B cell (primary cell): ENCODE measurements at regions of chr22 and their contacts with region 1.

Region 1: GRCh38 chr22:33565580-33565995 is 354.7 kb downstream of the LARGE1 start:
- DNase-seq: no peak
- ATAC-seq: no peak
- H3K4me3 ChIP-seq: no peak overlapping the region
- H3K4me3 Mint-ChIP-seq: peak overlapping the region; percentile 18
- H3K27ac ChIP-seq: no peak overlapping the region
- H3K27ac Mint-ChIP-seq: peak overlapping the region; percentile 67
- H3K4me1 ChIP-seq: peaks cover 70 to 73% of the 10 kb centered on the region in 2 donors
- H3K4me1 Mint-ChIP-seq: peaks cover 72% of the 10 kb centered on the region
- H3K27me3 ChIP-seq: no peaks in the 10 kb centered on the region
- H3K27me3 Mint-ChIP-seq: no peaks in the 10 kb centered on the region
- CTCF ChIP-seq: no peak

Region 2: GRCh38 chr22:33539902-33540751 is 25.5 kb before region 1 on chr22:
- CTCF ChIA-PET with region 1: no interaction called
- POLR2A ChIA-PET with region 1: no interaction called
- intact Hi-C with region 1: no loop called
- DNase-seq: no peak
- ATAC-seq: no peak
- H3K4me3 ChIP-seq: no peak overlapping the region
- H3K4me3 Mint-ChIP-seq: no peak overlapping the region
- H3K27ac ChIP-seq: no peak overlapping the region
- H3K27ac Mint-ChIP-seq: no peak overlapping the region
- H3K4me1 ChIP-seq: peaks cover 16 to 22% of the 10 kb centered on the region in 2 donors
- H3K4me1 Mint-ChIP-seq: peaks cover 27% of the 10 kb centered on the region
- H3K27me3 ChIP-seq: no peaks in the 10 kb centered on the region
- H3K27me3 Mint-ChIP-seq: no peaks in the 10 kb centered on the region
- CTCF ChIP-seq: no peak

Region 3: GRCh38 chr22:33579448-33580093 is 14.0 kb after region 1 on chr22:
- CTCF ChIA-PET with region 1: interaction called, 31 read pairs
- POLR2A ChIA-PET with region 1: interaction called, 6 read pairs
- intact Hi-C with region 1: loop called (anchors 1 kb)
- DNase-seq: peak; percentile 79
- ATAC-seq: peak; percentile 69
- H3K4me3 ChIP-seq: no peak overlapping the region
- H3K4me3 Mint-ChIP-seq: peak overlapping the region; percentile 61
- H3K27ac ChIP-seq: peak overlapping the region; percentile 48 to 72
- H3K27ac Mint-ChIP-seq: peak overlapping the region; percentile 86
- H3K4me1 ChIP-seq: peaks cover 46 to 52% of the 10 kb centered on the region in 2 donors
- H3K4me1 Mint-ChIP-seq: peaks cover 51% of the 10 kb centered on the region
- H3K27me3 ChIP-seq: no peaks in the 10 kb centered on the region
- H3K27me3 Mint-ChIP-seq: no peaks in the 10 kb centered on the region
- CTCF ChIP-seq: peak; percentile 98

Region 4: GRCh38 chr22:33841281-33842005 is 275.9 kb after region 1 on chr22:
- CTCF ChIA-PET with region 1: no interaction called
- POLR2A ChIA-PET with region 1: no interaction called
- intact Hi-C with region 1: loop called (anchors 2 kb)
- DNase-seq: no peak
- ATAC-seq: peak; percentile 24
- H3K4me3 ChIP-seq: peak overlapping the region in 1 of 5 experiments; percentile 31
- H3K4me3 Mint-ChIP-seq: peak overlapping the region; percentile 74
- H3K27ac ChIP-seq: peak overlapping the region; percentile 10 to 27
- H3K27ac Mint-ChIP-seq: peak overlapping the region; percentile 67
- H3K4me1 ChIP-seq: peaks cover 15 to 18% of the 10 kb centered on the region in 2 donors
- H3K4me1 Mint-ChIP-seq: peaks cover 42% of the 10 kb centered on the region
- H3K27me3 ChIP-seq: no peaks in the 10 kb centered on the region
- H3K27me3 Mint-ChIP-seq: no peaks in the 10 kb centered on the region
- CTCF ChIP-seq: no peak